CD4-positive, alpha-beta T cell (primary cell): ENCODE measurements at regions of chr1 and their contacts with region 1.

Region 1: DNA sequence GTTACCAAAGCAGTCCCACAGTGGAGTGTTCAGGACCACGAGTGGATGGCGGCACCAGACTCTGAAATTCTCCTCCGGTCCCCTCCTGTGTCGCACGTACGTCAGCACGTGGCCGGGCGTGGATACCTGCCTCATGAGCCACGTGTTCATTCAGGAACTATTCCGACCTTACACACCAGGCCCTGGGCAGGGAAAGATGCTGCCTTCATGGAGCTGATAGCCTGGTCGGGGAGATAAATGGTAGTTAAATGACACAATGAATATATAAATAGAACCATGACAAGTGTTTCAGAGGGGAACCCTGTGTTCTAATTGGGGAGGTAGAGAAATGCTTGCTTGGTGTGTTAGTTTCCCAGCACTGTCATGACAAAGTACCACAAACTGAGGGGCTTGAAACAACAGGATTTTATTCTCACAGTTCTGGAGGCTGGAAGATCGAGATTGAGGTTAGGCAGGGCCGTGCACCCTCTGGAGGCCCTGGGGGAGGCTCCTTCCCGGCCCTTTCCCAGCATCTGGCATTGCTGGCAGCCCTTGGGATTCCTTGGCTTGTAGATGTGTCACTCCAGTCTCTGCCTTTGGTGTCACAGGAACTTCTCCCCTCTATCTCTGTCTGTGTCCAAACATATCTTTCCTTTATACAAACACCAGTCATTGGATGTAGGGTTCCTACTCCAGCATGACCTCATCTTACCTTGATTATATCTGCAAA is 28.9 kb upstream of the GPR137B start:
- DNase-seq: no peak
- ATAC-seq: no peak
- H3K4me3 ChIP-seq: no peak overlapping the region
- H3K4me3 Mint-ChIP-seq: no peak overlapping the region
- H3K27ac ChIP-seq: no peak overlapping the region
- H3K27ac Mint-ChIP-seq: no peak overlapping the region
- H3K4me1 ChIP-seq: peaks cover 3% of the 10 kb centered on the region
- H3K4me1 Mint-ChIP-seq: peaks cover 3% of the 10 kb centered on the region
- H3K27me3 ChIP-seq: no peaks in the 10 kb centered on the region
- H3K27me3 Mint-ChIP-seq: no peaks in the 10 kb centered on the region
- CTCF ChIP-seq: no peak

Region 2: DNA sequence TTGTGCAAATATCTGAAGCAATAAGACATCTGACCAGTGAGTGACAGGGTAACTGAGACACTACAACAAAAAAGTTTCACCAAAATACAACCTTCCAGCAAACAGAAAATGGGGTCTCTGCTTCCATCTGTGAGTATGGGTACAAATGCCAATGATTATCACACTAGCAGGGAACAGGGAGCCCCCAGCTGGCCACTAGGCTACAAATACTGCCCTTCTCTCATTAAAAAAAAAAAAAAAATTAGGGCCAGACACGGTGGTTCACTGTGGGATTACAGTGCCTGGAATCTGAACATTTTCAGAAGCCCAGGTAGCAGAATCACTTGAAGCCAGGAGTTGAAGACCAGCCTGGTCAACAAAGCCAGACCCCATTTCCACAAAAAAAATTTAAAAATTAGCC is 232.2 kb after region 1 on chr1:
- CTCF ChIA-PET with region 1: no interaction called
- POLR2A ChIA-PET with region 1: no interaction called
- intact Hi-C with region 1: loop called in 1 of 2 experiments (anchors 5 kb)
- DNase-seq: no peak
- ATAC-seq: no peak
- H3K4me3 ChIP-seq: no peak overlapping the region
- H3K4me3 Mint-ChIP-seq: no peak overlapping the region
- H3K27ac ChIP-seq: no peak overlapping the region
- H3K27ac Mint-ChIP-seq: no peak overlapping the region
- H3K4me1 ChIP-seq: no peaks in the 10 kb centered on the region
- H3K4me1 Mint-ChIP-seq: no peaks in the 10 kb centered on the region
- H3K27me3 ChIP-seq: peaks cover 0 to 4% of the 10 kb centered on the region in 2 experiments
- H3K27me3 Mint-ChIP-seq: peaks cover 18% of the 10 kb centered on the region
- CTCF ChIP-seq: no peak

Region 3: GRCh38 chr1:236489710-236490377 is 376.4 kb after region 1 on chr1:
- CTCF ChIA-PET with region 1: interaction called, 4 read pairs
- POLR2A ChIA-PET with region 1: no interaction called
- intact Hi-C with region 1: loop called (anchors 1 kb)
- DNase-seq: peak in 3 of 14 experiments; percentile 53 to 71 (median 63)
- ATAC-seq: peak; percentile 59
- H3K4me3 ChIP-seq: no peak overlapping the region
- H3K4me3 Mint-ChIP-seq: no peak overlapping the region
- H3K27ac ChIP-seq: no peak overlapping the region
- H3K27ac Mint-ChIP-seq: no peak overlapping the region
- H3K4me1 ChIP-seq: no peaks in the 10 kb centered on the region
- H3K4me1 Mint-ChIP-seq: peaks cover 9% of the 10 kb centered on the region
- H3K27me3 ChIP-seq: no peaks in the 10 kb centered on the region
- H3K27me3 Mint-ChIP-seq: peaks cover 6% of the 10 kb centered on the region
- CTCF ChIP-seq: peak; percentile 85

Region 4: GRCh38 chr1:237834461-237834860 is 1721.0 kb after region 1 on chr1:
- CTCF ChIA-PET with region 1: no interaction called
- POLR2A ChIA-PET with region 1: no interaction called
- intact Hi-C with region 1: no loop called
- DNase-seq: no peak
- ATAC-seq: no peak
- H3K4me3 ChIP-seq: no peak overlapping the region
- H3K4me3 Mint-ChIP-seq: no peak overlapping the region
- H3K27ac ChIP-seq: no peak overlapping the region
- H3K27ac Mint-ChIP-seq: no peak overlapping the region
- H3K4me1 ChIP-seq: no peaks in the 10 kb centered on the region
- H3K4me1 Mint-ChIP-seq: no peaks in the 10 kb centered on the region
- H3K27me3 ChIP-seq: no peaks in the 10 kb centered on the region
- H3K27me3 Mint-ChIP-seq: no peaks in the 10 kb centered on the region
- CTCF ChIP-seq: no peak